Activated CD8-positive, alpha-beta T cell treated with anti-CD3 and anti-CD28 coated beads, Interleukin-2, amount 10 ng/mL, durations not matched to agents 7 days and 5 days (primary cell): ENCODE measurements at regions of chr4 and their contacts with region 1.

Region 1: DNA sequence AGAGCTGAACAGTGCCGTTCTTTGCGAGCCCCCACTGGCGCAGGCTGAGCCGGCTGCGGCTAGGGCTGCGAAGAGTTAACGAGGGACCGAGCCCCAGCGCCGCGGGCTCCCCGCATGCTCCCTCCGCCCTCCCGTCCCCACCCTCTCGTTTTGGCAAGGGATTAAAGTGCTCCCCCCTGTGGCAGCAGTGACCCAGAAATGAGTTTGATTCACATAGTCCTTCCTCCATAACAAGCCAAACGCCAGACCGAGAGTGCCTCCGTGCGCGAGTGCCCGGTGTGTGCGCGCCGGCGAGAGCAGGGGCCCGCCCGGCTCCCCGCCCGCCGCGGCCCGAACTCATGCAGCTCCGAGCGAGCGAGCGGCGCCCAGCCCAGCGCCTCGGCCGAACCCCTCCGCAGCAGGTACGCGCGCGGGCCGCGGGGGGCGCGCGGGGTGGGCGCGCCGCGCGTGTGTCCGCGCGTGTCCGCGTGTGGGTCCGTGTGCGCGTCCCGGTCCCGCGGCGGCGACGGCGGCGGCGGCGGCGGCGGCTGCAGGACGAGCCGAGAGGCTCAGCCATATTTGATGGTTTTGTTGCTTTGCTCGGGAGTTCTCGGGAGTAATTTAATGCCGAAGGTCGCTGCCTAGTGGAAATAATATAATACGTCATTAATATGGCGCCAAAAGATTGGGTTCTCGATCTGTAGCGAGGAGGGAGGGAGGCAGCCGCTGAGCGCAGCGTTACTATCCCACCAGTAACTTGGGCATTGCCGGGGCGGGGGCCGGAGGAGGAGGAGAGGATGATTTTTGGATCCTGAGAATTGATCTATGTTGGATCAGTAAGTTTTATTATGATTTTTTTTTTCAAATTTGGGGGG is at the start of gene JADE1:
- DNase-seq: peak; percentile 94
- ATAC-seq: peak; percentile 68
- H3K4me3 Mint-ChIP-seq: peak within 1 kb of the TSS; percentile 99
- H3K27ac Mint-ChIP-seq: peak within 1 kb of the TSS; percentile 99
- H3K4me1 Mint-ChIP-seq: peaks cover 19% of the 10 kb centered on the region
- H3K27me3 Mint-ChIP-seq: peaks cover 2% of the 10 kb centered on the region
- total RNA-seq, gene JADE1: 33.5 to 36.0 TPM

Region 2: DNA sequence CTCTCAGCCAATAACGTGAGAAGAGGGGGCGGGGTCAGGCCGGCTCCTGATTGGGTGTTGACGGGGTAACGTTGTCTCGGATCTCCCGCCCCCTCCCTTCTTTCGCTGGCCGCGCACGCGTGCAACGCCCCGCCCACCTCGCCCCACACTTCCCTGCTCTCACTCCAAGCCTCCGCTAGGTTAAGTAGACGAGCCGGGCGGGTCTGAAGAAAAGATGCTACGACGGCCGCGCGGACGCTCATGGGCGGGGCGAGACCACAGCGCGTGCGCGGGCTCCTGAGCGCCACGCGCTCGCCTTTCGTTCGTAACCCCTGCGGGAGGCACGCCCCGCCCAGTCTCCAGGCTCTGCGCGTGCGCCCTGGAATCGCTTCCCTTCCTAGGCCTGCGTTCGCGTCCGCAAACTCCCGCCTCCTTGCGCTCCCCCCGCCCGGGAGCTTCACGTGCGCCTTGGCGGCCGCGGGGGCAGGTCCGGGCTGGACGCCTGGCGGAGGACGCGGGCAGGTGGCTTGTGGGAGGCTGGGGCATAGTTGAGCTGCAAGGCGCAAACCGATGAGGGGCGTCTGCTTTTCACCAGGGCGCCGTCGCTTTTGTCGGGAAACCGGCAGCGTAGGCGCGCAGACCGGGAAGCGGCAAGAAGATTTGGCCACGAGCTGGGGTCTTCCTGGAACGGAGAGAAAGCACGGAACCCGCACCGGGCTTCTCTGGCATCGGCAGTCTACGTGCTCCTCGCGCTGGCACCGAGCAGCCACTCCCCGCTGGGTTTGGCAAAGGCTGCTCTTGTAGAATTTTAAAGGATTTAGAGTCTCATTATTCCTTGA is 521.6 kb before region 1 on chr4:
- CTCF ChIA-PET with region 1: no interaction called
- POLR2A ChIA-PET with region 1: interaction called, 14 read pairs
- DNase-seq: peak; percentile 100
- ATAC-seq: peak; percentile 89
- H3K4me3 Mint-ChIP-seq: peak overlapping the region; percentile 96
- H3K27ac Mint-ChIP-seq: peak overlapping the region; percentile 88
- H3K4me1 Mint-ChIP-seq: peaks cover 31% of the 10 kb centered on the region
- H3K27me3 Mint-ChIP-seq: no peaks in the 10 kb centered on the region

Region 3: DNA sequence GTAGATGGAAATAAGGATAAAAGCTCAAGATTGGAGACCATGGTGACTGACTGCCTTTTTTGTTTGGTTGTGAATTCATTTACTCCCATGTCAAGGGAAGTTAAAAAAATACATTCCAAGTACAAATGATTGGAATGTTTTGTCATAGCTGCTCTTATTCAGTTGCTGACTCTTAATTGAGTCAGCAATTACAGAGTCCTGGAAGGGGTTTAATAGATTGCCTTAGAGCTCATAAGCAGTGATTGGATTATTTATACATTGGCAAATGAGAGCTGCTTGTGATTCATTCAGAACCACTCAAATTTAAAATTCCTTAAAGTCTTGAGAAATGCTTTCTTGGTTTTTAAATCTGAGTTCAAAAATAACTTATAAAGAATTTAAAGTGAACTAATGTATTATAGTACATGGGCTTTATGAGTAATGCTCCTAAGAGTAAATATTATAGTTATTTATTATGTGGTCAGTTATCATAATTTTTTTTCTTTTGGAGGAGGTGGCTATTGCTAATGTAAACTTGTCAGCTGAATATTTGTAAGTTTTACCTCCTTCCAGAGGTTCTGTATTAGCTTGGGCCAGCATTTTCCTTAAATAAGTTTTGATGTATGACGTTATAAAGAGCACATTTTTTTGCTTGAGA is 13.4 kb after region 1 on chr4:
- CTCF ChIA-PET with region 1: interaction called, 8 read pairs
- POLR2A ChIA-PET with region 1: interaction called, 14 read pairs
- DNase-seq: no peak
- ATAC-seq: no peak
- H3K4me3 Mint-ChIP-seq: no peak overlapping the region
- H3K27ac Mint-ChIP-seq: no peak overlapping the region
- H3K4me1 Mint-ChIP-seq: peaks cover 46% of the 10 kb centered on the region
- H3K27me3 Mint-ChIP-seq: no peaks in the 10 kb centered on the region

Region 4: DNA sequence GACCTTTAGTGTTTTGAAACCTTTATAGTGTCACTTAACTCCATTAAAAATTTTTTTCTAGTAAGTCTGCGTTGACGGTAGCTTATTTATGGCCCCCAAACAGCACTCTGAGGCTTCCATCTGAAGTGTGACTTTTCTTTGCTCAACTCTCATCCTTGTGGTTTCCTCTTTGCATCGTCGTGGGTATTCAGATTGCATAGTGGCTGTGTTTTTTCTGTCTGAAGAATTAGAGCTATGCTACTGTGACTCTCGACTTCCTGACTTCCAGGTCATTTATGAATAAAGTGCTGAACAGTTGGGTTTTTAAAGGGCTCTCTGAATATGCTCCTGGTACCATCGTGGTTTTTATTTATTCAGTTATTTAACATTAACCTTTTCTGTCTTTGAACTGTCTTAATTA is 44.7 kb after region 1 on chr4:
- CTCF ChIA-PET with region 1: interaction called, 11 read pairs
- POLR2A ChIA-PET with region 1: interaction called, 29 read pairs
- DNase-seq: peak; percentile 57
- ATAC-seq: peak; percentile 96
- H3K4me3 Mint-ChIP-seq: peak overlapping the region; percentile 47
- H3K27ac Mint-ChIP-seq: peak overlapping the region; percentile 80
- H3K4me1 Mint-ChIP-seq: peaks cover 54% of the 10 kb centered on the region
- H3K27me3 Mint-ChIP-seq: no peaks in the 10 kb centered on the region

Region 5: GRCh38 chr4:128863312-128864075 is 53.8 kb after region 1 on chr4:
- CTCF ChIA-PET with region 1: interaction called, 9 read pairs
- POLR2A ChIA-PET with region 1: interaction called, 12 read pairs
- DNase-seq: peak; percentile 73
- ATAC-seq: peak; percentile 62
- H3K4me3 Mint-ChIP-seq: no peak overlapping the region
- H3K27ac Mint-ChIP-seq: peak overlapping the region; percentile 51
- H3K4me1 Mint-ChIP-seq: peaks cover 47% of the 10 kb centered on the region
- H3K27me3 Mint-ChIP-seq: no peaks in the 10 kb centered on the region

Region 6: GRCh38 chr4:129093191-129093920 is 283.7 kb after region 1 on chr4 and contains the start of gene SCLT1:
- CTCF ChIA-PET with region 1: interaction called, 7 read pairs
- POLR2A ChIA-PET with region 1: interaction called, 47 read pairs
- DNase-seq: peak; percentile 98
- ATAC-seq: peak; percentile 95
- H3K4me3 Mint-ChIP-seq: no peak within 1 kb of the TSS
- H3K27ac Mint-ChIP-seq: peak within 1 kb of the TSS; percentile 46
- H3K4me1 Mint-ChIP-seq: peaks cover 45% of the 10 kb centered on the region
- H3K27me3 Mint-ChIP-seq: no peaks in the 10 kb centered on the region
- total RNA-seq, gene SCLT1: 36.0 to 37.7 TPM